AG04449 (cell line): ENCODE measurements at regions of chr17 and their contacts with region 1.

Region 1: DNA sequence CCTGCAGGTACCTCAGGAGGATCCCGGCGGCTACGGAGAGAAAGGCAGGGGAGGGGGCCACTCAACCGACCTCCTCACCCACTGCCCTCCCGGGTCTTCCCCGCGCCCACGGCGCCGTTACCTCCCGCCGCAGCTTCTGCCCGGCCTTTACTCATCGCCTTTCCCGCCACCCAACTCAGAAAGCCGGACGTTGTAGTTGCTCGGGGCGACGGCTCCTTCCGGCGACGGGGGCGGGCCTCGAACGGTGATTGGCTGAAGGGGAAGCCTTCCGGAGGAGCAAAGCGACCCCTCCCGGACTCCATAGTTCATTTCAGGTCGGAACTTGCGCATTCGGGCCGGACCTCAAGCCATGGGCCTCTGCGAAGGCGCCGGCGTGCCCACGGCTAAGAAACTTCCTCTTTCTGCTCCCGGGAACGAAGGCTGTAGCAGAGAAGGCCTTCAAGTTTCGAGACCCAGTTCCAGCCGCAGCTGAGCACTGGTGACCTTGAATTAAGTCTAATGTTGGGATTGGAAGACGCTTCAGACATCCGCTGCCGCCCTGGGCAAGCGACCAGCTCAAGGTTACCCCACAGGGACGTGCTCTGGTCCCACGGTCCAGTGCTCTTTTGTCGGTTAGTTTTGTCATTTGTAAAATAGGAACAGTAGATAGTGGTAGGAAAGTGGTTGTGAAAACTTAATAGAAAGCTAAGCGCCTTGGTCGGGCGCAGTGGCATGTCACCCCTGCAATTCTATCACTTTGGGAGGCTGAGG is at the start of gene PSMC3IP:
- DNase-seq: peak; percentile 65
- H3K4me3 ChIP-seq: peak within 1 kb of the TSS; percentile 91
- CTCF ChIP-seq: peak; percentile 68

Region 2: DNA sequence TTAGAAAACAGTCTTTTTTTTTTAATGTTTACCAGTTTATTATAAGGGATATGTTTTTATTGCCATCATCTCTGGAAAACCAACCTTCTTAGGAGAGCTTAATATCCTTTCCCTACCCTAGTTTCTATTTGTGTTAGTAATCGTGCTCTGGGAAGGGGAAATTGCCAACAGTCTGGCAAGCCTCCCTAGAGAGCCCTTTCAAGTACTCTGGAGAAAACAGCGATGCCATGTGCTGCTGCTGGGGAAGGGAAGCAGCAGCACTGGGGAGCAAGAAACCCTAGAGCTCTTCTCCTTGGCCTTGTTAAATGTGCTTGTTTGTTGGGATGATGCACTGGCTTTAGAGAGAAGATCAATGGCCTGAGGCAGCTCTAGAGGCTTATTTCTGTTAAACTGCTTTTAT is 21.2 kb after region 1 on chr17:
- CTCF ChIA-PET with region 1: interaction called, 18 read pairs
- POLR2A ChIA-PET with region 1: no interaction called
- DNase-seq: no peak
- H3K4me3 ChIP-seq: no peak overlapping the region
- CTCF ChIP-seq: no peak

Region 3: DNA sequence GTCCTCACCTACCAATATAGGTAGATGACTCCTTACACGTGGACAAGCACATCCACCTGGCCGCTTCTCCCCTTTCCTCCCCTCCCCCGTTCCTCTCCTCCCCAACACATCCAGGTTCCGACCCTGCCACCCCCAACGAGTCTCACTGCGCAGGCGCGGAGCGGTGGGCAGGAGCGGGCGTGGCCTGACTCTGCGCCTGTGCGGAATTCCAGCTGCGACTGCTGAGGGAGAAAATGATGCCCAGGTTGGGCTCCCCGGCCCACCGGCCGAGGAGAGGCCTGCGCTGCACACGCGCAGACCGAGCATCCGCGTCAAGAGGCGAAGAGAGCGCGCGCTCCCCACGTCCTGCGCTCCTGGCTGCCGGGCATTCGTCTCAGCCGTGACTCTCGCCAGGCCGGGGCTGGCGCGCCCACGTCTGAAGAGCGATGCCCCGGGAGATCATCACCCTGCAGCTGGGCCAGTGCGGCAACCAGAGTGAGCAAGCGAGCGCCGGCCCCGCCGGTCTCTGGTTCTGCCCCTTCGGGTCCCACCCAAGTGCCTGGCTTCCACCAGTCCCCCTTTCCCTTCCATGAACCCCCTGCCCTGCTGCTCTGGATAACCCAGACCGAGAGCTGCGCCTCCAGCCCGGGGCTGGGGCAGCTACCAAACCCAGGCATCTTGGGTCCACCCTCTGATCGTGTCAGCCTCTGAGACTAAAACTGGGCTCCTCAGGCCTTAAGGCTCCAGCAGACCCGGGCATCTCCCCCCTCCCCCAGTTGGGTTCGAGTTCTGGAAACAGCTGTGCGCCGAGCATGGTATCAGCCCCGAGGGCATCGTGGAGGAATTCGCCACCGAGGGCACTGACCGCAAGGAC is 81.6 kb after region 1 on chr17 and contains the start of gene TUBG2:
- CTCF ChIA-PET with region 1: interaction called, 22 read pairs
- POLR2A ChIA-PET with region 1: no interaction called
- DNase-seq: no peak
- H3K4me3 ChIP-seq: peak within 1 kb of the TSS; percentile 67
- CTCF ChIP-seq: no peak

Region 4: GRCh38 chr17:42698736-42699414 is 121.2 kb after region 1 on chr17:
- CTCF ChIA-PET with region 1: interaction called, 18 read pairs
- POLR2A ChIA-PET with region 1: no interaction called
- DNase-seq: no peak
- H3K4me3 ChIP-seq: no peak overlapping the region
- CTCF ChIP-seq: no peak